ENCODE measurements at regions of chr15 and their contacts with region 1.

Region 1: DNA sequence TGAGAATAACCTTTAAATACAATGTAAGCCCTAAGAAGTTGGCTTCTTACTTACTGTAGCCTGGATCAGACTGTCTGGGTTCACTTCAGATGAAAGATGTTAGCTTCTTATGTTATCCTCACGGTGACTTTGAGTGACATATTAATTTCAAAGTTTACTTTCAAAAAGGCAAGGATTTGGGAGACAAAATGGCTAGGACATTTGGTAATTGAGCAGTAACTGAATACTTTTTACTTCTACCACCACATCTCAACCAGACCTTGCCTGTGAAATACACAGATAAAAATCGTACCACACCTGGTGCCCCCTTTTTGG is 36.0 kb upstream of the BNIP2 start:
- DNase-seq: no peak
- ATAC-seq: no peak
- H3K4me3 ChIP-seq: no peak overlapping the region
- H3K27ac ChIP-seq: no peak overlapping the region
- H3K4me1 ChIP-seq: peaks cover 6 to 7% of the 10 kb centered on the region in 2 experiments; a peak in 3 of 4 replicates
- H3K27me3 ChIP-seq: peaks cover 25% of the 10 kb centered on the region
- CTCF ChIP-seq: no peak
- POLR2A ChIP-seq: no peak
- RAD21 ChIP-seq: no peak

Region 2: GRCh38 chr15:59711451-59712243 is 13.5 kb before region 1 on chr15:
- CTCF ChIA-PET with region 1: interaction called, 11 read pairs
- POLR2A ChIA-PET with region 1: no interaction called
- RAD21 ChIA-PET with region 1: no interaction called
- intact Hi-C with region 1: no loop called
- DNase-seq: no peak
- ATAC-seq: no peak
- H3K4me3 ChIP-seq: no peak overlapping the region
- H3K27ac ChIP-seq: no peak overlapping the region
- H3K4me1 ChIP-seq: no peaks in the 10 kb centered on the region
- H3K27me3 ChIP-seq: no peaks in the 10 kb centered on the region
- CTCF ChIP-seq: no peak
- POLR2A ChIP-seq: no peak
- RAD21 ChIP-seq: no peak